ENCODE measurements at regions of chr1 and their contacts with region 1.

Region 1: DNA sequence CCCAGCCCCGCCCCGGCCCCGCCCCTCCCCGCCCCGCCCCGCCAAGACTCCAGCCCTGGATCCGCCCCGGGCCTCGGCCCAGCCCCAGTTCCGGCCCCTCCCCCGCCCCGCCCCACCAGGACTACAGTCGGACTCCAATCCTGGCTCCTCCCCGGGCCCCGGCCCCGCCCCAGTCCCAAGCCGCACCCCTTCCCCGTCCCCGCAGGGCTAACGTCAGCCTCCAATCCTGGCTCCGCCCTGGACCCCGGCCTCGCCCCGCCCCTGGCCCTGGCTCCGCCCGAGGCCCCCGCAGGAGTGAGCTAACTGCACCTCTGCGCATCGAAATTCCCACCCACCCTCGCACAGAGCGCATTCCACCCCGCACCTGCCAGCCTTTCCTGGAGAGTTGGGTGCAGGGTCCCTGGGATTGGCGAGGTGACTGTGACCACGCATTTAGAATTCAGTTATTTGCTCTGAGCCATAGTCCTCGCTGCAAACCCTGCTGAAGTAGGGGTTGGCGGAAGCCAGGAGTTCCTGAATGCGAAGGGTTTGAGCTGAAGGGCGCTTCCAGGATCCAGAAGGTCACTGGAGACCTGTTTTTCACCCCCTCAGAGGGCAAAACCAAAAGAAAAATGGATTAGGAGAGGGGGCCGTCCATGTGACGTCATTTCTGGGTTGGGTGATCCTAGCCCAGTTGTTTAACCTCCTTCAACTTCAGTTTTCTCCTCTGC is 588 bp upstream of the IGSF8 start:
- DNase-seq: peak; percentile 99
- H3K4me3 ChIP-seq: peak overlapping the region; percentile 56 to 90 (median 76)
- H3K27ac ChIP-seq: peak overlapping the region; percentile 91 to 98 (median 95)
- H3K4me1 ChIP-seq: peaks cover 0 to 65% (median 58%) of the 10 kb centered on the region in 4 donors
- H3K27me3 ChIP-seq: no peaks in the 10 kb centered on the region
- CTCF ChIP-seq: no peak
- EP300 ChIP-seq: no peak
- POLR2A ChIP-seq: peak; percentile 67 to 83

Region 2: DNA sequence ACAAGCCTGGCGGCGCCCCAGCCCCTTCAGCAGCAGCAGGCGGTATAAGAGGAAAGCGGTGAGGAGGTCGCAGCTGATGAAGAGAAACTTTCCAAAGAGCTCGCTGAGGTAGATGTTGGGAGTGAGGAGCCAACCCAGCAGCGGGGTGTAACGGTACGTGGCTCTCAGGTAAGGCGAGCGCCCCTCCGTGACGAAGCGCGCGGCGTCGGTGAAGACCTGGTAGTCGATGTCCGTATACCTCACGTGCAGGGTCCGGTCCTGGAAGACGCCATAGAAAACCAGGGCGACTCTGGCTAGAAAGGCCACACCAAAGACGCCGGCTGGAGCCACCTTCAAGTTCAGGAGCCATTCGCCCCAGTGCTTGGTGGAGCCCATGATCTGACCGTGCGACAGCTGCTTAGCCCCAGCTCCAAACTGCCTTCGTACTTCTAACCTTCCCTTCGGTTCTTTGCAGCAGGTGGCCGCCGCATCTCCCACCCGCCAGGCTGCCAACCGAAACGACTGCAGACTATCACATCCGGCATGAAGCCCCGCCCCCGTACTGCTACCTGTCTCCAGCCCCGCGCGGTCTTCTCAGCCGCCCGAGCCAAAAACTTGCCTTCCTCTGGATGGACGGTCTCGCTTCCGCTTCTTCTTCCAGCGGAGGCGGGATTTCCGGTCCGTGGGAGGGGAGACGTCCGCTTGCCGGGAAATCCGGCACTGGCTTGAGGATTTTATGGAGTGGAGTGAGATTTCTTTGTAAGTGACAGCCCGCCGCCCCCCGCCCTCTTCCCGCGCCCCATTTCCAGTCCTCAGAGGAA is 67.4 kb before region 1 on chr1 and contains the start of gene PIGM:
- intact Hi-C with region 1: loop called (anchors 5 kb)
- DNase-seq: peak; percentile 97
- H3K4me3 ChIP-seq: peak within 1 kb of the TSS; percentile 76 to 86 (median 82)
- H3K27ac ChIP-seq: peak within 1 kb of the TSS; percentile 73 to 82 (median 79)
- H3K4me1 ChIP-seq: peaks cover 0 to 29% (median 23%) of the 10 kb centered on the region in 4 donors
- H3K27me3 ChIP-seq: no peaks in the 10 kb centered on the region
- CTCF ChIP-seq: no peak
- EP300 ChIP-seq: peak in 1 of 4 donors; percentile 9
- POLR2A ChIP-seq: peak in 1 of 2 donors; percentile 29
- total RNA-seq, gene PIGM: 3.3 to 4.7 (median 4.5) TPM

Region 3: GRCh38 chr1:160219062-160219929 is 120.3 kb after region 1 on chr1:
- intact Hi-C with region 1: loop called (anchors 1 kb)
- DNase-seq: peak; percentile 81
- H3K4me3 ChIP-seq: no peak overlapping the region
- H3K27ac ChIP-seq: peak overlapping the region; percentile 73 to 84 (median 76)
- H3K4me1 ChIP-seq: peaks cover 0 to 44% (median 40%) of the 10 kb centered on the region in 4 donors
- H3K27me3 ChIP-seq: no peaks in the 10 kb centered on the region
- CTCF ChIP-seq: peak; percentile 52 to 70 (median 59)
- EP300 ChIP-seq: no peak
- POLR2A ChIP-seq: no peak

Region 4: GRCh38 chr1:160291248-160292220 is 192.5 kb after region 1 on chr1:
- intact Hi-C with region 1: loop called (anchors 2 kb)
- DNase-seq: peak; percentile 81
- H3K4me3 ChIP-seq: no peak overlapping the region
- H3K27ac ChIP-seq: peak overlapping the region in 2 of 4 donors; percentile 29 to 47
- H3K4me1 ChIP-seq: peaks cover 0 to 4% (median 2%) of the 10 kb centered on the region in 4 donors
- H3K27me3 ChIP-seq: no peaks in the 10 kb centered on the region
- CTCF ChIP-seq: peak; percentile 73 to 88 (median 77)
- EP300 ChIP-seq: no peak
- POLR2A ChIP-seq: no peak

Region 5: DNA sequence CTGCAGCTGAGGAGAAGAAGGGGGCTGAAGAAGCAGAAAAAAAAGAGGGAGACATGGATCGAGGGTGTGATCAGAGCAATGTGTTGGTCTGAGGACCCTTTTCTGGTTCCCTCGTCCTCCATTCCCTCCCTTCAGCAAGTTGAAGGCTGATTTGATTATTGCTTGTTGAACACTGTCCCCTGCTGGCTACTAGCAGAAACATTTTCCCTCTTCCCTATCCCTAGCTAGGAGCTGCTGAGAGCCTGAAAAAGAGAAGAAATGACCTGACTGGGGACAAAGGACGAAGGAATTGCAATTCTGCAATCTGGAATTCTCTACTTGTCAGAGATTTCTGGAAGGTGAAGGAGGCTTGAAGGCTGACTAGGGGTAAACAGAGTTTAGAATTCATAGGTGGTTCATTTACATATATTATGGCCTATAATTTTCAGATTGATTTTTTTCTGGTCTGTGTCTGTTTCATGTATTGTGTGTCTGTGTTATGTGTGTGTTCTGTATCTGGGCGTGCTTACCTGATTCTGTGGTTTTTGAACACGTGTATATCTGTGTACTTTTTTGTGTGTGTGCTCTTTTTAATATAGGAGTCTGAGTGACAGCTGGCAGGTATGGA is 277.6 kb after region 1 on chr1:
- intact Hi-C with region 1: loop called (anchors 10 kb)
- DNase-seq: no peak
- H3K4me3 ChIP-seq: no peak overlapping the region
- H3K27ac ChIP-seq: peak overlapping the region; percentile 37 to 58 (median 55)
- H3K4me1 ChIP-seq: peaks cover 0 to 4% (median 0%) of the 10 kb centered on the region in 4 donors
- H3K27me3 ChIP-seq: peaks cover 0 to 5% (median 0%) of the 10 kb centered on the region in 3 donors
- CTCF ChIP-seq: peak; percentile 77 to 83 (median 82)
- EP300 ChIP-seq: no peak
- POLR2A ChIP-seq: no peak